Heart left ventricle (tissue), 16 donors: ENCODE measurements at regions of chr6 and their contacts with region 1.

Region 1: GRCh38 chr6:109255946-109256640 is 126.2 kb downstream of the CD164 start:
- DNase-seq: no peak
- ATAC-seq: no peak
- H3K4me3 ChIP-seq: no peak overlapping the region
- H3K27ac ChIP-seq: no peak overlapping the region
- H3K4me1 ChIP-seq: peaks cover 0 to 7% (median 0%) of the 10 kb centered on the region in 12 donors
- H3K27me3 ChIP-seq: no peaks in the 10 kb centered on the region
- CTCF ChIP-seq: no peak
- POLR2A ChIP-seq: no peak

Region 2: DNA sequence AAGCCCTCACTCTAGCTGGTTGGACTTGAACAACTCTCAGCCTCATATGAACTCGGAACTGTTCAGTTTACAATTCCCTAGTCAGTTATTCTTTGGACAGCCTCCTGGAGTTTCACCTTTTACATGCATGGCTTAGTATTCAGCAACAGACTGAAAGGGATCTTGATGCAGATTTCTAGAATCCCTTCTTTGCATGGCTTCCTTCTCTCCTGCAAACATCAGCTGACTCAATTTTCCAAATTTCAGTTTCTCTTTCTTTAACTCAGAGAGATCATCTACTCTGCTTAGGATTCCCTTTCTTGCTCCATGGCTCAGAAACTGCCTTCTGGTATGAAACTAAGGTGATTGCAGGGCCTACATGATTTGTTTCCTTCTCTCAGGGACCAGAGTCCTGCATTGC is 61.2 kb before region 1 on chr6:
- intact Hi-C with region 1: loop called in 1 of 10 experiments (anchors 10 kb)
- DNase-seq: no peak
- ATAC-seq: no peak
- H3K4me3 ChIP-seq: no peak overlapping the region
- H3K27ac ChIP-seq: no peak overlapping the region
- H3K4me1 ChIP-seq: peaks cover 0 to 7% (median 0%) of the 10 kb centered on the region in 12 donors
- H3K27me3 ChIP-seq: no peaks in the 10 kb centered on the region
- CTCF ChIP-seq: no peak
- POLR2A ChIP-seq: no peak